ENCODE measurements at regions of chr9 and their contacts with region 1.

Region 1: DNA sequence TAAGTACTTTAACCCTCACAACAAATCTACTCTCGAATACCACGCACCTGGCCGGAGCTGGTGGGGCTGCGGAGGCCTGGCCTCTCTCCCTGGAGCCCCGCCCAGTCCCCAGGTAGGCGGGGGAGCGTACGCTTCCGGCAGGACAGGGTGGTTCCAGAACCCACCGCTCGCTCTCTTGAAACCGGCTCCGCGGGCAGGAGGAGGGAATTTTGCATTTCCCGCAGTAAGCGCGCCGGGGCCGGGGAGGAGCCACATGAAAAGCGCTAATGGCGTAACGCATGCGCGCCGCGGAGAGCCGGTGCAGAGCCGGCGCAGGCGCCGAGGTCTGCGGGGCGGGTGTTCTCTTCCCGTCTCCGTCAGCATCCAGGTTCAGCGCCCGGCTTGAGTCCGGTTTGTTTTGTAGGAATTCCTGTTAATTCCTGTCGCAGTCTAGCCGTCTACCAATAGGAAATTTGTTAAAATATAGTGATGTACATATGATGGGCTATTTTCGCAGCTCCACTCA is 20.8 kb downstream of the CAVIN4 start:
- ATAC-seq: peak; percentile 86 to 98 (median 94)
- H3K4me3 ChIP-seq: peak overlapping the region; percentile 21 to 43 (median 30)
- H3K27ac ChIP-seq: no peak overlapping the region
- H3K4me1 ChIP-seq: peaks cover 4 to 5% of the 10 kb centered on the region in 2 donors

Region 2: DNA sequence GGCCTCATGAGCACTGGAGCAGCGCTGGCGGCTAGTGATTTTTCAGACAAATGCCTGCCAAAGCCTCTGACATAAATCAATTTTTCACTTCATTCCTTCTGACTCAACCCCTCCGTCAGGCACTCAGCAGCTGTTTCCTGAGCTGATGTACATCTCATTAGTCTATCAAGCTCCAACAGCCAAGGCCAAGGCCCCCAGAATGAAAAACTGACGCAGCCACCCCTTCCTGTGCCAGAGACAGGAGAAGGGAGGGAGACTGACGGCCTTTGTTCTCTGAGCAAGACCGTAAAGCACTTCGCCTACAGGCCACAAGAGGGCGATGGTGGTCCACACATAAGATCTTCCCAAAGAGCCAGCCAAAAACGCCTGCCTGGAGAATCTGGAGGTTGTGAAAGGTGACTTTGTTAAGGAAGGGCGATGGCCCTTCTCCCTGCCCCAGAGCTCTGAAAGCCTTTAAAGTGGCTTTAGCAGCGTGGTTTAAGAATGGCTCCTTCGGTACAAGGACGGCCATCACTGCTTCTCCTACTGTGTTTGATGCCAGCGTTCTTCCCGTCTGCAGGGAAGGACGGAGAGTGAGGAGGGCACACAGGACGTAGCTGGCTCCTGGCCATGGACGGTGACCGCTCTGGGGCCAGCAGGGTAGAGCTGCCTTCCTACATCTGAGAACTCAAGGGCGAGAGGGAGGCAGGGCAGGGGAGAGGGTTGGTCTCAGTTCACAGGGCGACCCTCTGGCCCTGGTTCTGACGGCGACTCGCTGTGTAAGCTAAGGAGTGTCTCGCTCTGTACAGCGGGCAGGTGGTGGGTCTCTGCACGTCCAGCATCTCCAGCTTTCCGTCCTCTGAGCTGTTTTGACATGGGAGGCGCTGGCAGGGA is 1414.0 kb before region 1 on chr9:
- in situ Hi-C with region 1: loop called in 1 of 9 experiments (anchors 25 kb)
- ATAC-seq: peak; percentile 90 to 99 (median 96)
- H3K4me3 ChIP-seq: no peak overlapping the region
- H3K27ac ChIP-seq: peak overlapping the region; percentile 26 to 42
- H3K4me1 ChIP-seq: peaks cover 20 to 26% of the 10 kb centered on the region in 2 donors

Region 3: DNA sequence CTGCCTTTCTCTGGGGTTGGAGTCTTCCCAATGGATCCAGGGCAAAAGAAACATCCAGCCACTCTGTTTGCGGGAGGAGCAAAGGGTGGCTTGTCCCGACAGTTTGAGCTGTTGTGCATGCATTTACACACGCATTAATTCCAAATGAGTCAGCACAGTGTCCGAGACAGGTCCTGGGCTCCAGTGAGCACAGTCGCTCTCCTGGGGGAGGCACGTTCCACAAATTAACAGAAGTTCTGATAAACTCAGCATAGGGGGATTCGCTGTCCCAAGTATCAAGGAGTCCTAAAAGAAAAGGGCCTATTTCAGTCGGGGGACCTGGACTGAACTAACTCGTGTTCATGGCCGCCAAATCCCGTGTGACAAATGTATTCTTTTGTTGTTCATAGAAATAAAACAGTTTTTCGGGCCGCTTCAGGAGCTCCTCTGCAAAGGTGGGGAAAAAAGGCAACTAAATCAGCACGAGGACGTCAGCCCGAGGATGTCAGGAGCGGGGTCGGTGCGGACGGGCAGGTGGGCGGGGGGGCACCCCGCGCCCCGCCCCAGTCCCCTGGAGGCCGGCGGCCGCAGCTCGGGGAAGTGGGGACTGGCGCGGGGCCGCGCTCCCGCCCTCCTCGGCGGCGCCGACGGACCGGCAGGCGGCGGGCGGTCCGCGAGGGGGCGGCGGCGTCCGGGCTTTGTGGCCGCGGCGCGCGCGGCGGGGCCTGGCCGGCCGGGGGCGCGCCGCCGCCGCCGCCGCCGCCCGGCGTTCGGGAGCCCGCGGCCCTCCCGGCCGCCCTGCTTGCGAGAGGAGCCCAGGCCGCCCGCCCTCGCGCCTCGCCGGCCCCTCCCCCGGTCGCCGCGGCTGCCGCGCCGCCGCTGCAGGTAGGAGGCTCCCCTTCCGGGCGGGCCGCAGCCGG is 171.9 kb before region 1 on chr9 and contains the start of gene MSANTD3:
- in situ Hi-C with region 1: loop called in 1 of 9 experiments (anchors 25 kb)
- ATAC-seq: peak; percentile 57 to 78 (median 73)
- H3K4me3 ChIP-seq: peak within 1 kb of the TSS; percentile 81 to 93 (median 86)
- H3K27ac ChIP-seq: peak within 1 kb of the TSS; percentile 91 to 96
- H3K4me1 ChIP-seq: peaks cover 14 to 26% of the 10 kb centered on the region in 2 donors
- total RNA-seq, gene MSANTD3: 27.7 to 56.0 (median 34.6) TPM

Region 4: GRCh38 chr9:100492952-100493351 is 105.7 kb before region 1 on chr9:
- in situ Hi-C with region 1: no loop called
- ATAC-seq: peak in 4 of 8 experiments; percentile 26 to 58 (median 42)
- H3K4me3 ChIP-seq: no peak overlapping the region
- H3K27ac ChIP-seq: no peak overlapping the region
- H3K4me1 ChIP-seq: peaks cover 7 to 8% of the 10 kb centered on the region in 2 donors

Region 5: GRCh38 chr9:101311758-101312420 is 713.2 kb after region 1 on chr9:
- in situ Hi-C with region 1: loop called in 4 of 9 experiments (anchors 25 kb)
- ATAC-seq: peak; percentile 49 to 86 (median 66)
- H3K4me3 ChIP-seq: no peak overlapping the region
- H3K27ac ChIP-seq: no peak overlapping the region
- H3K4me1 ChIP-seq: peaks cover 0 to 2% of the 10 kb centered on the region in 2 donors